ENCODE measurements at regions of chr12 and their contacts with region 1.

Region 1: GRCh38 chr12:94133964-94134795 is 14.2 kb upstream of the PLXNC1 start:
- DNase-seq: no peak
- ATAC-seq: peak; percentile 38 to 86 (median 80)
- H3K4me3 ChIP-seq: no peak overlapping the region
- H3K27ac ChIP-seq: no peak overlapping the region
- H3K4me1 ChIP-seq: no peaks in the 10 kb centered on the region
- H3K27me3 ChIP-seq: no peaks in the 10 kb centered on the region
- CTCF ChIP-seq: peak; percentile 39 to 79 (median 73)

Region 2: GRCh38 chr12:93857279-93857938 is 276.8 kb before region 1 on chr12:
- intact Hi-C with region 1: no loop called
- DNase-seq: no peak
- ATAC-seq: no peak
- H3K4me3 ChIP-seq: no peak overlapping the region
- H3K27ac ChIP-seq: no peak overlapping the region
- H3K4me1 ChIP-seq: no peaks in the 10 kb centered on the region
- H3K27me3 ChIP-seq: no peaks in the 10 kb centered on the region
- CTCF ChIP-seq: no peak

Region 3: DNA sequence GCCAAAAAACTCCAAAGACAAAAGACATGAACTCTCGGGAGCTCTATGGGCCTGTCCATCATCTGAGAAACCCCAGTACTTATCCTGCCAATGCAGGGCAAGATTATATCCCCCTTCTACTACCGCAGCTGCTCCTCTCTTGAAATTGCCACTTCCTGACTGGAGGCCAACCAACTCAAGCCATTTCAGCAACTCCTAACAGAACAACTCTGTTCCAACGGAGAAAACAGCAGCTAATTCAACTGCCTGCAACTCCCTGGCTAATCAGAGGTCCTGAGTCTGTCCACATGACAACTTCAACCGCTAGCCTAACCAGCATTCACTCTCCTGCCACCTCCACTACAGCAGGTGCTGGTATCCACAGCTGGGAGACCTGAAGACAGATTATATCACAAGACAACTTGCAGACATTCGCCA is 301.3 kb after region 1 on chr12:
- intact Hi-C with region 1: loop called in 1 of 3 experiments (anchors 10 kb)
- DNase-seq: peak in 1 of 6 donors; percentile 14
- ATAC-seq: peak; percentile 46 to 79 (median 66)
- H3K4me3 ChIP-seq: no peak overlapping the region
- H3K27ac ChIP-seq: peak overlapping the region in 1 of 4 donors; percentile 5
- H3K4me1 ChIP-seq: peaks cover 0 to 26% (median 12%) of the 10 kb centered on the region in 3 donors
- H3K27me3 ChIP-seq: no peaks in the 10 kb centered on the region
- CTCF ChIP-seq: no peak

Measured in pancreas (tissue), 10 donors.